ENCODE measurements at regions of chr15 and their contacts with region 1.

Region 1: GRCh38 chr15:65792130-65792987 is at the start of gene DENND4A:
- DNase-seq: peak; percentile 99
- ATAC-seq: peak; percentile 82
- H3K4me3 Mint-ChIP-seq: peak within 1 kb of the TSS; percentile 82
- H3K27ac Mint-ChIP-seq: peak within 1 kb of the TSS; percentile 93
- H3K4me1 Mint-ChIP-seq: peaks cover 62% of the 10 kb centered on the region
- H3K27me3 Mint-ChIP-seq: no peaks in the 10 kb centered on the region
- total RNA-seq, gene DENND4A: 40.1 to 45.0 TPM

Region 2: GRCh38 chr15:65804252-65804931 is 12.0 kb after region 1 on chr15:
- CTCF ChIA-PET with region 1: interaction called, 6 read pairs
- POLR2A ChIA-PET with region 1: interaction called, 83 read pairs
- DNase-seq: no peak
- ATAC-seq: no peak
- H3K4me3 Mint-ChIP-seq: no peak overlapping the region
- H3K27ac Mint-ChIP-seq: no peak overlapping the region
- H3K4me1 Mint-ChIP-seq: peaks cover 37% of the 10 kb centered on the region
- H3K27me3 Mint-ChIP-seq: no peaks in the 10 kb centered on the region

Region 3: GRCh38 chr15:65818927-65819562 is 26.7 kb after region 1 on chr15:
- CTCF ChIA-PET with region 1: interaction called, 35 read pairs
- POLR2A ChIA-PET with region 1: interaction called, 99 read pairs
- DNase-seq: peak; percentile 42
- ATAC-seq: peak; percentile 84
- H3K4me3 Mint-ChIP-seq: peak overlapping the region; percentile 50
- H3K27ac Mint-ChIP-seq: peak overlapping the region; percentile 93
- H3K4me1 Mint-ChIP-seq: peaks cover 58% of the 10 kb centered on the region
- H3K27me3 Mint-ChIP-seq: no peaks in the 10 kb centered on the region

Region 4: GRCh38 chr15:65832549-65833364 is 40.4 kb after region 1 on chr15:
- CTCF ChIA-PET with region 1: interaction called, 24 read pairs
- POLR2A ChIA-PET with region 1: interaction called, 63 read pairs
- DNase-seq: peak; percentile 72
- ATAC-seq: peak; percentile 77
- H3K4me3 Mint-ChIP-seq: peak overlapping the region; percentile 67
- H3K27ac Mint-ChIP-seq: peak overlapping the region; percentile 95
- H3K4me1 Mint-ChIP-seq: peaks cover 62% of the 10 kb centered on the region
- H3K27me3 Mint-ChIP-seq: no peaks in the 10 kb centered on the region

Region 5: GRCh38 chr15:66603301-66604179 is 811.2 kb after region 1 on chr15:
- CTCF ChIA-PET with region 1: no interaction called
- POLR2A ChIA-PET with region 1: no interaction called
- DNase-seq: peak; percentile 74
- ATAC-seq: peak; percentile 88
- H3K4me3 Mint-ChIP-seq: no peak overlapping the region
- H3K27ac Mint-ChIP-seq: no peak overlapping the region
- H3K4me1 Mint-ChIP-seq: peaks cover 9% of the 10 kb centered on the region
- H3K27me3 Mint-ChIP-seq: peaks cover 18% of the 10 kb centered on the region